Posterior vena cava (tissue), 2 donors: ENCODE measurements at regions of chr12 and their contacts with region 1.

Region 1: GRCh38 chr12:40953076-40953475 is 235.0 kb upstream of the PDZRN4 start:
- DNase-seq: no peak

Region 2: GRCh38 chr12:40937891-40938290 is 15.2 kb before region 1 on chr12:
- intact Hi-C with region 1: loop called in 1 of 2 experiments (anchors 1 kb)
- DNase-seq: no peak

Region 3: GRCh38 chr12:41100572-41100971 is 147.5 kb after region 1 on chr12:
- intact Hi-C with region 1: no loop called
- DNase-seq: no peak

Region 4: DNA sequence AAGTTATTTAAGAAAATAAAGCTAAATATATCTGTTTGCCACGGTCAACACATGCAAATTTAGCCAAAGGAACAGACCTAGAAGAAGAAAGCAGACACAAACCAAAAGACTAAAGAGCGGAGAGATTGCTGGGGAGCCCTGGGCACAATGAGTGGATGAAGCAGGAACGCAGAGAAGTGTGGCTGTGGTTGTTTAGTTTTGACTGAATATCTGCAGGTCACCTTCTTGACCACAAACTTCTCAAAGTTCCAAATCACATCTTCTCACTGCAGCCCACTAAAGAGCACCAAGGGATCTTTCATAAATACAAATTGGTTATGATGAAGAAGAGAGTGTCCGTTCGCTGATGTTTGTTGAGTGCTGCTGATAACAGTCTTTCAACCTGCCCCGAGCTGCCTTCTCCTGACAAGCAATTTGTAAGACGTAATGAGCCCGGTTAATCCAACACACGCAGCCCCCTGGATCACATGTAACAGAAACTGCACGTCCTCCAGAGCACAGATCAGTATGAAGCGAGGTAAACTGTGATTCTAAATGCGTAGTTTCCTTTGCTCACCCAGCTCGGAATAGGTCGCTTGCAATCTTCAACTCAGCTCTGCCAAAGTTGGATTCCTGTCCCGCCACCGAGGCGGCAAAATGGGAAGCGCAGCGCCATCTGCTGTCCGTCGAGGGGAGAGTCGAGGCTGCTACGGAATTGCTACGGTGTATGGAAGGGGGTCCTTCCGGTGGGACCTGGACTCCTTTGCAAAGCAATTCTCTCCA is 1070.8 kb after region 1 on chr12:
- intact Hi-C with region 1: loop called in 1 of 2 experiments (anchors 10 kb)
- DNase-seq: peak; percentile 90